ENCODE measurements at regions of chr5 and their contacts with region 1.

Region 1: GRCh38 chr5:56481428-56482357 is 248.6 kb upstream of the ANKRD55 start:
- DNase-seq: peak; percentile 30
- H3K4me3 Mint-ChIP-seq: peak overlapping the region; percentile 77
- H3K27ac Mint-ChIP-seq: peak overlapping the region; percentile 84
- H3K4me1 Mint-ChIP-seq: peaks cover 50% of the 10 kb centered on the region
- H3K27me3 Mint-ChIP-seq: no peaks in the 10 kb centered on the region

Region 2: GRCh38 chr5:56233230-56233629 is 248.5 kb before region 1 on chr5 and contains the start of gene ANKRD55:
- CTCF ChIA-PET with region 1: no interaction called
- POLR2A ChIA-PET with region 1: no interaction called
- DNase-seq: no peak
- H3K4me3 Mint-ChIP-seq: no peak within 1 kb of the TSS
- H3K27ac Mint-ChIP-seq: no peak within 1 kb of the TSS
- H3K4me1 Mint-ChIP-seq: no peaks in the 10 kb centered on the region
- H3K27me3 Mint-ChIP-seq: peaks cover 24% of the 10 kb centered on the region
- total RNA-seq, gene ANKRD55: 3.5 to 3.7 TPM

Region 3: DNA sequence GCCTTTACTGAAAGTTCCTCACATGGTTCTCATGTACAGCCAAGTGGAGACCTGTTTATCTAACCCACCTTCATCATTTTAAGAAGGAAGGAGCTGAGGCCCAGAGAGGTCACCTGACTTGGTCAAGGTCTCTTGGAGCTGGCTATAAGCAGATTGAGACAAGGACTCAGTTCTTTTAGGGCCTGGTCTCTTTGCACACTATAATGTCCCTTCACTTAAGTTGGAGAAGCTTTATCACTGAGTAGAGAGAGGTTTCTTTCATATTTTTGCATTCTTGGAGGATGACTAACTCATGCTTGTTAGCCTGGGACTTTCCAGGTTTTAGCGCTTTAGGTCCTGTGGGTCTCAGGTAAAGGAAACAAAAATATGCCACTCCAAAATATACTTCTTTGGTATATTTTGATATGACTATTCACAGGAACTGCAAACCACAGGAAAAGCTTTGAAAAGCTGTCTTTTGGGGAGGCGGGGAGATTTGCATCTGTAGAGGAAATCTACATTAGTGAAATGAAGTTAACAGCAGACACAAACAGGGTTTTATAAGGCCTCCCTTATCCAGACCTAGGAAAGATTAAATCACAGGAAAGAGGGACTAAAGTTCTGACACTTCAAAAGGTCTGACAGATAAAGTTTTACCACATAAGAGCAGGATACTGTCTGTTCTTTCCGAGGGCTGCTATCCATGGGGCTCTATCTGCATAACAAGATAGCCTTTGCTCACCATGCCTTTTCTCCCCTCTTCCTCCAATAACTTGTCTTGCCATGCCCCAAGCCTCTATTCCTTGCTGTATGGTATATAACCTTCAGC is 152.7 kb before region 1 on chr5:
- CTCF ChIA-PET with region 1: interaction called, 9 read pairs
- POLR2A ChIA-PET with region 1: interaction called, 34 read pairs
- DNase-seq: peak; percentile 52
- H3K4me3 Mint-ChIP-seq: peak overlapping the region; percentile 29
- H3K27ac Mint-ChIP-seq: peak overlapping the region; percentile 82
- H3K4me1 Mint-ChIP-seq: peaks cover 61% of the 10 kb centered on the region
- H3K27me3 Mint-ChIP-seq: no peaks in the 10 kb centered on the region

Region 4: DNA sequence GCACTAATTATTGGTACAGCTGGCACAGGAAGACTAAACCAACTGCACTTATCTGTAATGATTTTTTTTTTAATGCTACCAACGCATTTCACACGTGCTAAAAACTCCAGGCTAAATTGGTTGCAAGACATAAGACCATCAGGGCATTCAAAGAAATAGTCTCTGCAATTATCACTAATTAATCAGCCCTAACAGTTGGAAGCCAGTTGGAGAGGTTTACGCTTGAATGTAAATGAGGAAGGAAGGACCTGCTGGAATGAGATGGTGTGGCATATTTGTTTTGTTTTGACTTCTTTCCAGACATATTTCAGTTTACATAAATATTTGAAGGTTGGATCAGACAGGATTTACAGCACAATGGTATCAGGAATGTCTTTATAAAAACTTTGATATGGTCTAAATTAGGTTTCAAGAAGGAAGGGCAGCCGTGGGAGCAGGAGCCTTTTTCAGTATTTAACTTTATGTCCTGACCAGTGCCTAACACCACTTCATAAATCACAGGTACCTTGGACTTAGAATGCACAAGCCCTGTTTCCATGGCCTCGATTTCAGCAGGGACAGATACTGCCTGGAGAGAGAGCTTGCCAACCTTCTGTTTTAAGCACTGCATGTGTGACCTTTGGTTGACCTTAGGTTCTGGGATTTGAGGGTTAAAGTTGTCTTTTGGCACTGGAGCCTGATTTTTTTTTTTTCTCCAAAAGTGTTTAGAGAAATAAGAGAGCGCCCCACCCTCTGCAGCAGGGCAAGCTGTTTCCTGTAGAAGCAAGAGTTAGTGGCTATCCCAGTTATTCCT is 133.9 kb after region 1 on chr5:
- CTCF ChIA-PET with region 1: interaction called, 3 read pairs
- POLR2A ChIA-PET with region 1: interaction called, 28 read pairs
- DNase-seq: no peak
- H3K4me3 Mint-ChIP-seq: no peak overlapping the region
- H3K27ac Mint-ChIP-seq: peak overlapping the region; percentile 38
- H3K4me1 Mint-ChIP-seq: peaks cover 65% of the 10 kb centered on the region
- H3K27me3 Mint-ChIP-seq: no peaks in the 10 kb centered on the region

Region 5: DNA sequence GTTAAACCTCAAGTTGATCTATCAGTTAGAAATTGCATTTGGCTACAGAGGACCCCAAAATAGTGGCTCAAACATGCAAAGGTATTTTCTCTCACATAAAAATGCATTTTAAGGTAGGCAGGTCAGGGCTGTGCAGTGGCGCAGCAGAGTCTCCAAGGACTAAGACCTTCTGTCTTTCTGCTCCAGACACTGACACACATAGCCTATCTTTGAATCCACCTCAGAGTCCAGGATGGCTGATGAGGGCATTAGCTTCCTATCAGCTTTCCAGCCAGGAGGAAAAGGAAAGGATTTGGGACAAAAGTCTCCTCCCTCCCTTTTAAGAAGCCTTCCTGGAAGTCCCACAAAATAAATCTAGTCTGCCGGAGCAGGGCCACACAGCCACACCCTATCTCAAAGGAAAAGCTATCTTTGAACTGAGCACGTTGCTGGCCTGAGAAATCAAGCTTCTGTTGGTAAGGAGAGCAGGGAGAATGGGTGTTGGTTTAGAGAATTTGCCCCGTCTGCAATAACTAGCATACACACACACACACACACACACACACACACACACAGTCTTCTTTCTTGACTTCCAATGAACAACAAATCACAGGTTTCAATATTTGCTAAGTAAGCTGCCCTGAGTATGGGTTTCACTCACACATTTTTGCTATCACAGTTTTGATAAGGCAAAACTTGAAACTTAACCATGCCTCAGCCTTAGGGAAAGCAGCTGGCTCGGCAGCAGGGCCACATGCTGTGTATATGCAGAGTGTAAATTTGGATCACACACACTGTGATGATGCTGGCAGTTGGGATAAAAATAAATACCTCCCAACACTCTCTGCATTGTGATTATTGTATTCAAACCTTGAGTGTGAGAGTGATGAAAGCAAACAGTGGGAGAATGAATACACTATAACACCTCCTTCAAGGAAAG is 217.0 kb after region 1 on chr5:
- CTCF ChIA-PET with region 1: interaction called, 3 read pairs
- POLR2A ChIA-PET with region 1: interaction called, 12 read pairs
- DNase-seq: no peak
- H3K4me3 Mint-ChIP-seq: no peak overlapping the region
- H3K27ac Mint-ChIP-seq: peak overlapping the region; percentile 73
- H3K4me1 Mint-ChIP-seq: peaks cover 62% of the 10 kb centered on the region
- H3K27me3 Mint-ChIP-seq: peaks cover 2% of the 10 kb centered on the region

Region 6: GRCh38 chr5:56838409-56839039 is 356.8 kb after region 1 on chr5:
- CTCF ChIA-PET with region 1: interaction called, 15 read pairs
- POLR2A ChIA-PET with region 1: interaction called, 20 read pairs
- DNase-seq: no peak
- H3K4me3 Mint-ChIP-seq: peak overlapping the region; percentile 33
- H3K27ac Mint-ChIP-seq: peak overlapping the region; percentile 50
- H3K4me1 Mint-ChIP-seq: peaks cover 66% of the 10 kb centered on the region
- H3K27me3 Mint-ChIP-seq: no peaks in the 10 kb centered on the region

Measured in activated CD4-positive, alpha-beta memory T cell treated with anti-CD3 and anti-CD28 coated beads, Interleukin-2, amount 10 ng/mL, durations not matched to agents 7 days and 5 days (primary cell).